ENCODE measurements at regions of chr7 and their contacts with region 1.

Region 1: DNA sequence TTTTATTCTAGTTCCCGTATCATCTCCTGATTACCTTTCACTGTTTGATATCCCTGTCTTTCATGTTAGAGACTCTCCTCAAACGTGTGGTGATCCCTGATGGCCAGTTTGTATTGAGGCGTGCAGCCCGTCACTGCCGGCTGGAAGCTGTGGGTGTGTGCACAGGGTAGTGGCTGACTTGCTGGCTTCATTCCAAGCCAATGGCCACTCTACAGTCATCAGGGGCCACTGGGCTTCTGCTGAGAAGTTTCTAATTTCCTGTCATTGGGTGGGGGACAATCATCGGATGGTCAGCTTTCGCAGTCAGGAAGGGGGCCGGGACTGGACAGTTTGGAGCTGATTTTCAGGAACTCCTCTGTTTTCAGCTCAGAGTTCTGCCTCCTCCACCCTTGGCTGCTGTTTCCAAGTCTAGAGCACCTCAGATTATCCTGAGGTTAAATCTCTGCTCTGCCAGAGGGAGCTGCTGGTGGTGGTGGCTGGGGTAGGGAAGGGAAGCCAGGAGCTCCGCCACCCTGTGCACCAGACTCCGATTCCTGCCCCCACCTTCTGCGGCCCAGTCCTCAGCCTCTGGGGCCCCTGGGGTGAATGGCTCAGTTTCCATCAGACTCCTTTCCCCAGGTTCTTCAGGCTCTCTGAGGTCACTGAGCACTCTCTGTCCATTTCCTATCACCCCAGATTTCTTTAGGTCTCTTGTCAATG is 34.9 kb downstream of the BAIAP2L1 start:
- DNase-seq: peak; percentile 68 to 81 (median 74)
- ATAC-seq: peak; percentile 89 to 97 (median 93)
- H3K4me3 ChIP-seq: peak overlapping the region in 1 of 12 donors; percentile 8
- H3K27ac ChIP-seq: peak overlapping the region; percentile 38 to 83 (median 72)
- H3K4me1 ChIP-seq: peaks cover 0 to 23% (median 2%) of the 10 kb centered on the region in 12 donors
- H3K27me3 ChIP-seq: no peaks in the 10 kb centered on the region
- CTCF ChIP-seq: no peak
- POLR2A ChIP-seq: peak in 1 of 2 donors; percentile 26

Region 2: DNA sequence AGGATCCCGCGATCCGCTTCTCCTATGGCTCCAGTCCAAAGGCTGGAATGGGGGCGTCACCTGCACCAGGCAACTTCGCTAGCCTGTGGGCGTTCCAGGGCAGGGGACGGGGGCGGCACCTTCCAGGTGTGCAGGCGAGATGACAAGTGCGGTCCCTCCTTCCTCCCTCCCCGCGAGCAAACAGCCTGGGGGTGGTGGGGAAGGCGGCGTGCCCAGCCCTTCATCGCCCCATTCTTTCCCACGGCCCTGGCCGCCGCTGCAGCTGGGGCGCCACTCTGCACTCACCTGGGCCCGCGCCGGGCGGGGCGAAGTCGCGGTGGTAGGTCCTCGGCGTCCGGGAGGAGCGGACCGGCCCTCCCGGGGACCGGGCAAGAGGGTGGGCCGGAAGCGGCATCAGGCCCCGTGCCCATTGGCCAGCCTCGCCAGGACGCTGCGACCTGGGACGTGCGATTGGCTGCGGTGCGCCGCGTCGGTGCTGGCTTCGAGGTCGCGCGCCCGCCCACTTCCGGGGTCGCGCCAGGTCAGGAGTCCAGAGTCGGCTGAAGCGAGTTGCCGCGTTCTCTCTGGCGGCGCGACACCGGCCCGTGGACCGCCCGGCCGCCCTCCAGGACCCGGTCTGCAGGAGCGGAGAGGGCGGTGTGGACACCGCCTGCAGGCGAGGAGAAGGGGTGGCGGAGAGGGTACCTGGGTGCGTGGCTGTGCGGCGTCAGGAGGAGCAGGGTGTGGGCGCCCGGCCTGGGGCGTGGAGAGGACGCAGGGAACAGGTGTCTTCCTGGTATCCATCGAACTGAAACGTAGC is 114.0 kb before region 1 on chr7 and contains the start of gene TECPR1:
- intact Hi-C with region 1: no loop called
- DNase-seq: peak; percentile 96 to 97 (median 97)
- ATAC-seq: peak; percentile 98 to 100 (median 99)
- H3K4me3 ChIP-seq: peak within 1 kb of the TSS; percentile 71 to 99 (median 90)
- H3K27ac ChIP-seq: peak within 1 kb of the TSS; percentile 39 to 91 (median 88)
- H3K4me1 ChIP-seq: peaks cover 0 to 61% (median 35%) of the 10 kb centered on the region in 12 donors
- H3K27me3 ChIP-seq: no peaks in the 10 kb centered on the region
- CTCF ChIP-seq: no peak
- POLR2A ChIP-seq: peak in 1 of 2 donors; percentile 53
- total RNA-seq, gene TECPR1: 12.2 to 33.0 (median 22.7) TPM

Region 3: DNA sequence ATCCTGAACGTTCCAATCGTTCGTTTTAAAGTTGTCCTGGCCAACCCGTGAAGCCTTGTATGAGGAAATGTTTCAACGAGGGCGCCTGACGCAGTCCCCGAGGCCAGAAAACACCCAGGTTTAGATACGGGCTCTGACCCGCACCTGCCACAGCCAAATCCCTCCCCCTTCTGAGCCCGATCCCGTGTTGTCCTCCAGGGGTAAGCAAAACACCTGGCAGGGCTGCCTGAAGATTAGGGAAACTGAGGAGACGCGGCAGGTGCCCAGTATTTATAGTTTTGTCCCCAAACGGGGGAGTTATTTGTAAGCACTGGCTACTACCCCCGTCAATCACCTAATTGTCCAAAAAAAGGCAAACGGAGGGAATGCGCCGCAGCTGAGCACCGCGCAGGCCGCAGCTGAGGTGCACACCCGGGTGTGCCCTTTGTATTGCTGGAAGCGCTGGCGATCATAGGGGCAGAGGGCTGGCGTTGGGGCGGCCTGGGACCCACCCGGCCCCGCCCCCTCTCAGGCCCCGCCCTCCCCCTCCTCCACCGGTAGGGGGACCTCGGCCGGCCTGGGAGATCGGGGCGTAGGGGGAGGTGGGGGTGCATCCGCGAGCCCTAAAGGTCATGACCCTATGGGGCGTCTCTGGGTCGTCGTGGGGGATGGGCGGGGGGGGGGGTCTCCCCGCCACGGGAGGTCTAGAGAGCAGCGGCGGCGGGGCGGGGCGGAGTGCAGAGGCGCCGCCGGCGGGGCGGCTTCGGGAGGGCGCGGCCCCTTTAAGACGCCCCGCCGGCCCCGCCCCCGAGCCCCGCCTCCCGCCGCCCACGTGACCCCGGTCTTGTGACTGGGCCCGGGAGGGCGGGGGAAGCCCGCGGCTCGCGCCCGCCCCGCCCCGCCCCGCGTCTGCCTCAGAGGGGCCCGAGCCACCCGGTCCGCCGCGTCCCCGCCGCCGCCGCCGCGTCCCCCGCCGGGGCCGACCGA is 84.9 kb before region 1 on chr7 and contains the start of gene BRI3:
- intact Hi-C with region 1: loop called in 1 of 10 experiments (anchors 5 kb)
- DNase-seq: peak; percentile 91 to 96 (median 94)
- ATAC-seq: peak; percentile 71 to 81 (median 76)
- H3K4me3 ChIP-seq: peak within 1 kb of the TSS; percentile 65 to 98 (median 86)
- H3K27ac ChIP-seq: peak within 1 kb of the TSS; percentile 79 to 99 (median 96)
- H3K4me1 ChIP-seq: peaks cover 16 to 54% (median 39%) of the 10 kb centered on the region in 12 donors
- H3K27me3 ChIP-seq: no peaks in the 10 kb centered on the region
- CTCF ChIP-seq: peak in 7 of 12 donors; percentile 12 to 59 (median 43)
- POLR2A ChIP-seq: peak in 1 of 2 donors; percentile 93
- total RNA-seq, gene BRI3: 51.0 to 274 (median 223) TPM

Region 4: DNA sequence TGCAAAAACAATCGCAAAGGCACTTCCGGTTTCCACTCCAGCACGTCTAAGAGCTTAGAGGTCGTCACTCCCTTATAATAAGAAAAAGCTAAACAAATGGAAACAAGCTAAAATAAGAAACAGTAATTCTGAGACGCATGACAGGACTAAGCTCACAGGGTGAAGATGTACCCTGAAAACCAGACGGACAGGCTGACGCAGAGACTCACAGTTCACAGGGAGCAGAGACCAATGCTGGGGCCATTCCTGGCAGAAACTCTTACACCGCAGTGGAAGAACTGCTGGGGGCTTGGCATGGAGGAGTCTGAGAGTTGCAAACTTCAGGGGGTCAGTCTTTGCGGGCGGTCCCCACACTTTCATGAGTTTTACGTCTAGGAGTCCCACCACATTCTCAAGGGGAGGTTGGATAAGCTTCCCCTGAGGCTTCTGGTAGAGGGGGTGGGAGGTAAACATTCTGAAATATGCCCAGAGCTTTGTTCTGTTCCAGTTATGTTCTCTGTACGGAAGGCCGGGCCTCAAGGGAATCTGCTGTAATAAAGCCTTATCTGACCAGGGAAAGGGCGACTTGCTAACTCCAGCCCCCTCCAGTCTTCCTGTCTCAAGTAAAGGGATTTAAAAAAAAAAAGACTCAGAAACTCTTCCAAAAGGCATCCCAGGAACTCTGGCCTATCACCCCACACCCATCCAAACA is 36.8 kb before region 1 on chr7:
- intact Hi-C with region 1: loop called in 2 of 10 experiments (anchors 2 to 5 kb)
- DNase-seq: peak in 4 of 5 donors; percentile 45 to 60 (median 46)
- ATAC-seq: peak; percentile 72 to 94 (median 85)
- H3K4me3 ChIP-seq: peak overlapping the region in 1 of 12 donors; percentile 22
- H3K27ac ChIP-seq: peak overlapping the region; percentile 51 to 88 (median 80)
- H3K4me1 ChIP-seq: peaks cover 0 to 15% (median 0%) of the 10 kb centered on the region in 12 donors
- H3K27me3 ChIP-seq: no peaks in the 10 kb centered on the region
- CTCF ChIP-seq: no peak
- POLR2A ChIP-seq: no peak

Region 5: DNA sequence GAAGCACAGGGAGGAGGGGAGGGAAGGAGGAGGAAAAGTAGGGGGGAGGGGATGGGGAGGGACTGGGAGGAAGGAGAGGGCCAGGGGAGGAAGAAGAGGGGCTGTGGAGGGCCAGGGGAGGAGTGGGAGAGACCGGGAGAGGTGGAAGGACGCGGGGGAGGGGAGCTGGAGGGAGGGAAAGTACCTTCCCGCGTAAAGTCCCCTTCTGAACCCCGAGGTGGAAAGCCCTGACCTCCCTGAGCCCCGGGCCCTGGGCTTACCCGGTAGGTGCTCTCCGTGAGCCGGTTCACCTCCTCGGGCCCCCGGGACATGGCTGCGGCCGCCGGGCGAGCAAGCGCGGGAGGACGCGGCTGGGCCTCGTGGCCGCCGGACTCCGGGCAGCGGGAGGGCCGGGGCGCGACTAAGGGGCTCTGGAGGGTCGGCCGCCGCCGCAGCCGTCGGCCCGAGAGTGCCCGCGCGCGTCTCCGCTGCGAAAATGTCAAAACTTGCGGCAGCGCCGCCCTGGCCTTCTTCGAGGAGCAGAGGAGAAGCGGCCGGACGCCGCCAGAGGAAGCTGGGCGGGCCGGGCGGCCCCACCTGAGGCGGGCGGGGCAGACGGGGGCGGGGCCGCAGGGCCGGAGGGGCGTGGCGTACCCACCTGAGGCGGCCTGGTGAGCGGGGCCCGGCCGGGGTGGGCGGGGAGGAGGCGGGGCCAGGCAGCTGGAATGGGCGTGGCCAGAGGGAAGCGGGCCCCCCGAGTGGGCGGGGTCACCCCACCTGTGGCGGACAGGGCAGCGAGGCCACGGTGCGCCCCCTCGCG is 34.7 kb after region 1 on chr7 and contains the start of gene BAIAP2L1:
- intact Hi-C with region 1: loop called in 1 of 10 experiments (anchors 2 kb)
- DNase-seq: peak; percentile 75 to 91 (median 81)
- ATAC-seq: peak; percentile 76 to 98 (median 94)
- H3K4me3 ChIP-seq: peak within 1 kb of the TSS; percentile 52 to 89 (median 66)
- H3K27ac ChIP-seq: peak within 1 kb of the TSS; percentile 29 to 85 (median 68)
- H3K4me1 ChIP-seq: peaks cover 0 to 12% (median 6%) of the 10 kb centered on the region in 12 donors
- H3K27me3 ChIP-seq: peaks cover 0 to 27% (median 12%) of the 10 kb centered on the region in 9 donors
- CTCF ChIP-seq: peak in 4 of 12 donors; percentile 62 to 80 (median 68)
- POLR2A ChIP-seq: peak in 1 of 2 donors; percentile 28
- total RNA-seq, gene BAIAP2L1: 0.64 to 2.7 (median 1.8) TPM